ENCODE measurements at regions of chr18 and their contacts with region 1.

Region 1: DNA sequence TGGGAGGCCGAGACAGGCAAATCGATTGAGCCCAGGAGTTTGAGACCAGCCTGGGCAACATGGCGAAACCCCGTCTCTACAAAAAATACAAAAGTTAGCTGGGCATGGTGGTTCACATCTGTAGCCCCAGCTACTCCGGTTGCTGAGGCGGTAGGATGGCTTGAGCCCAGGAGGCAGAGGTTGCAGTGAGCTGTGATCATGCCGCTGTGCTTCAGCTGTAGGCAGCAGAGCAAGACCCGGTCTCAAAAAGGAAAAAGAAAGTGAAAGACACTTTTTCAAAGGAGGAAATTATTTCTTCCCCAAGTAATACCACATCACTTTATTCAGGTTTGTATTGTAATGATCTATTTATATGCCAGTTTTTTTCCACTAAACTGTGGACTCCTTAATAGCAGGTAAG is 35.7 kb upstream of the TAF4B start:
- DNase-seq: peak in 34 of 35 experiments; percentile 8 to 59 (median 24)
- ATAC-seq: peak; percentile 83 to 94 (median 90)
- H3K4me3 ChIP-seq: peak overlapping the region; percentile 25 to 41
- H3K4me3 Mint-ChIP-seq: peak overlapping the region; percentile 71 to 81 (median 75)
- H3K27ac ChIP-seq: peak overlapping the region; percentile 75
- H3K27ac Mint-ChIP-seq: peak overlapping the region; percentile 87 to 93
- H3K4me1 ChIP-seq: peaks cover 2 to 9% of the 10 kb centered on the region in 2 experiments
- H3K4me1 Mint-ChIP-seq: peaks cover 23 to 30% (median 27%) of the 10 kb centered on the region in 3 donors
- H3K27me3 ChIP-seq: no peaks in the 10 kb centered on the region
- H3K27me3 Mint-ChIP-seq: no peaks in the 10 kb centered on the region

Region 2: DNA sequence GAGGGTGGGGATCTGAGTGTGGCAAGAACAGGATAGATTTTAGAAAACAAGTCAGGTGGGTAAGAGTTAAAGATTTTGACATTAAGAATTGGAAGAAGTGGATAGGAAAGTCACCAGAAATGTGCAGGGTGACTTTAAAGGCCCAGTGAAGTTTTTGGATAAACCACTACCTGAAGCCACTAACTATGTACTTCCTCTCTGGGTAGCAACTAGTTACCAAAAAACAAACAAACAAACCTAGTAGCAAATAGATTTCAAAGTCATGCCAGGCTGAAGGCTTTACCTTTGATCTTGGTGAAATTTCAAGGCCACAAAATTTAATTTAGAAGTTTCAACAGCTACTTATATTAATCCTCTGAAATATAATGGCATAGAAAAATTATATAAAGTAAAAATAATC is 14.4 kb before region 1 on chr18:
- CTCF ChIA-PET with region 1: interaction called in 1 of 2 experiments, 12 read pairs
- POLR2A ChIA-PET with region 1: interaction called in 1 of 2 experiments, 3 read pairs
- DNase-seq: peak in 1 of 35 experiments; percentile 15
- ATAC-seq: peak in 1 of 4 experiments; percentile 66
- H3K4me3 ChIP-seq: no peak overlapping the region
- H3K4me3 Mint-ChIP-seq: no peak overlapping the region
- H3K27ac ChIP-seq: no peak overlapping the region
- H3K27ac Mint-ChIP-seq: peak overlapping the region in 1 of 2 donors; percentile 64
- H3K4me1 ChIP-seq: no peaks in the 10 kb centered on the region
- H3K4me1 Mint-ChIP-seq: peaks cover 11 to 14% (median 14%) of the 10 kb centered on the region in 3 donors
- H3K27me3 ChIP-seq: no peaks in the 10 kb centered on the region
- H3K27me3 Mint-ChIP-seq: no peaks in the 10 kb centered on the region

Region 3: GRCh38 chr18:26322890-26323653 is 132.6 kb after region 1 on chr18:
- CTCF ChIA-PET with region 1: no interaction called
- POLR2A ChIA-PET with region 1: interaction called in 1 of 2 experiments, 10 read pairs
- DNase-seq: no peak
- ATAC-seq: no peak
- H3K4me3 ChIP-seq: no peak overlapping the region
- H3K4me3 Mint-ChIP-seq: no peak overlapping the region
- H3K27ac ChIP-seq: no peak overlapping the region
- H3K27ac Mint-ChIP-seq: no peak overlapping the region
- H3K4me1 ChIP-seq: no peaks in the 10 kb centered on the region
- H3K4me1 Mint-ChIP-seq: peaks cover 0 to 7% (median 0%) of the 10 kb centered on the region in 3 donors
- H3K27me3 ChIP-seq: no peaks in the 10 kb centered on the region
- H3K27me3 Mint-ChIP-seq: no peaks in the 10 kb centered on the region